Right cardiac atrium (tissue), 5 donors: ENCODE measurements at regions of chr20 and their contacts with region 1.

Region 1: DNA sequence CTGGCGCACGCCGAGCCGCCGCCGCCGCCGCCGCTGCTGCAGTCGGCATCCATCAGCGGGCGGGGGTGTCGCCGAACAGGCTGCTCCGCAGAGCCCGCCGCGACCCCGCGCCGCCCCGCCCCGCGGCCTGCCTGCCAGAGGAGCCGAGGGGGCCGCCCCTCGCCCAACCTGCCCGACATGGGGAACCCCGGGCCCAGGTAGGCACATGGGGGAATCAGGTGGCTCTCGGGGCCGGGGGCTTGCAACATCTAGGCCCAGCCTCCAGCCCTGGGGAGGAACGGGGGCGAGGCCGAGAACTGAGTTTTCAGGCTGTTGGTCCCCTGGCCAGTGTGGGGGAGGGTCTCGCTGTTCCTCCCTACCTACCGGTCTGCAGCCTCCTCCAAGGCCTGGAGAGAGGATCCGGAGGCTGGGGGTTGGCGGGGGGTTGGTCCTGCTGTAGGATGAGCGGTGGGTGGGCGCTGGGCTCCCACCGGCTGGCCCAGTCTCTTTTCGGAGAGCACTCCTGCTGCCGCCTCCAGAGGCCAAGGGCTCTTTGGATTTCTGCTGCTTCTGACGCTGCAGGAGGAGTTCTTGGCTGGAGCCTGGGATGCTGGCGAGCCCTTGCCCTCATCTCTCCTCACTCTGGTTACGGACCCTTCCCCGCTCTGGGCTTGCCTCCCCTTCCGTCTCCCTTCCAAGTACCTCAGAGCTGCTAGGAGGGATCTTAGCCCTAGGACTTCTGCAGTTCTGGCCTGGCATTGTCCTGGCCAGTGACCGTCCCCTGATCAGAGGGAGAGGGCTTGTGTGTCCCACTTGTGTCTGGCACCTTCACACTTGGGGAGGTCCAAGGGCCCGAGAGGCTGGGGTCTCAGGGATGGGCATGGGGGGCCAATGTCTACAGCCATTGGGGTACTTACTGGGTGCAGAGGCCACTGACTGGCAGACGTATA is at the start of gene EPB41L1:
- DNase-seq: peak in 2 of 3 donors; percentile 39 to 68
- ATAC-seq: peak; percentile 4 to 7
- H3K4me3 ChIP-seq: peak within 1 kb of the TSS; percentile 56
- H3K27ac ChIP-seq: peak within 1 kb of the TSS; percentile 16
- H3K4me1 ChIP-seq: no peaks in the 10 kb centered on the region
- H3K27me3 ChIP-seq: no peaks in the 10 kb centered on the region
- total RNA-seq, gene EPB41L1: 21.9 to 33.8 (median 28.8) TPM

Region 2: DNA sequence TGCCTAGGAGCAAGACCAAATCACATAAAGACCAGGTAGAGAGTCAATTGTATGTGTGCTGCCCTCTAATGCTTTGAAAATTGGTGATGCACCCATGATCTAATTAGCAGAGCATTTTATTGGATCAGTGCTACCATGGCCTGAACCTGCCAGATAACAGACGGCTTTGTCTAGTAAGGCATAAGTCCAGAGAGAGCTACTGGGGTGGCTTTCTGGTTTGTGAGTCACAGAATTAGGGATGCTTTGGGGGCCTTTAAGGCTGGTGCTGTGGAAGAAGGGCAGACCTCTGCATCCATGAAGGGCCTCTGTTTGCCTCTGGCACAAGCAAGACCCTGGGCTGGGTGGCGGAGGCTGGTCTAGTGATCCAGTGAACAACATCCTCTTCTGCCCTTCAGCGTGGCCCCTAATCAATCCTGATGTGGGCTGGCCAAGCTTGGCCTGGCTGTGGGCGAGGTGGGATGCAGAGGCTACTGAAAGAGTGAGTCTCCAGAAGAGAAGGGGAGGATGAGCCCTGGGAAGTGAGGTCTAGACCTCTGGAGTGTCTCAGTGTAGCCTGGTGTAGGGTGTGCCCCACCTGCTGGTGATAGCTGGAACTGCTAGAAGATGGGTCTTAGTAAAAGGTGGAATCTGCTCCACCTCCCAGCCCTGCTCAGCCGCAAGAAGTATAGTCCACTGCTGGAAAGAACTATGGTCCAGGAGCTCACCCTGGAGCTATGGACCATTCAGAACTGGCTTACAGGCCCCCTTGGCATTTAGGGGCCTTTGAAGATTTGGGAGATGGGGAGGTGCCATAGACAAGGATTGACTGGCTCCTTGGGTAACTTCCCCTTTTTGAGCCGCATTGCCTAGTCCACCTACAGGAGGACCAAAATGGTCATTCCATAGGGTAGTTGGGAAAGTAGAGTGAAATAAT is 44.6 kb after region 1 on chr20:
- intact Hi-C with region 1: loop called in 3 of 4 experiments (anchors 5 kb)
- DNase-seq: peak; percentile 72 to 89 (median 79)
- ATAC-seq: peak; percentile 71
- H3K4me3 ChIP-seq: no peak overlapping the region
- H3K27ac ChIP-seq: no peak overlapping the region
- H3K4me1 ChIP-seq: no peaks in the 10 kb centered on the region
- H3K27me3 ChIP-seq: no peaks in the 10 kb centered on the region